CD8-positive, alpha-beta T cell (primary cell): ENCODE measurements at regions of chr3 and their contacts with region 1.

Region 1: DNA sequence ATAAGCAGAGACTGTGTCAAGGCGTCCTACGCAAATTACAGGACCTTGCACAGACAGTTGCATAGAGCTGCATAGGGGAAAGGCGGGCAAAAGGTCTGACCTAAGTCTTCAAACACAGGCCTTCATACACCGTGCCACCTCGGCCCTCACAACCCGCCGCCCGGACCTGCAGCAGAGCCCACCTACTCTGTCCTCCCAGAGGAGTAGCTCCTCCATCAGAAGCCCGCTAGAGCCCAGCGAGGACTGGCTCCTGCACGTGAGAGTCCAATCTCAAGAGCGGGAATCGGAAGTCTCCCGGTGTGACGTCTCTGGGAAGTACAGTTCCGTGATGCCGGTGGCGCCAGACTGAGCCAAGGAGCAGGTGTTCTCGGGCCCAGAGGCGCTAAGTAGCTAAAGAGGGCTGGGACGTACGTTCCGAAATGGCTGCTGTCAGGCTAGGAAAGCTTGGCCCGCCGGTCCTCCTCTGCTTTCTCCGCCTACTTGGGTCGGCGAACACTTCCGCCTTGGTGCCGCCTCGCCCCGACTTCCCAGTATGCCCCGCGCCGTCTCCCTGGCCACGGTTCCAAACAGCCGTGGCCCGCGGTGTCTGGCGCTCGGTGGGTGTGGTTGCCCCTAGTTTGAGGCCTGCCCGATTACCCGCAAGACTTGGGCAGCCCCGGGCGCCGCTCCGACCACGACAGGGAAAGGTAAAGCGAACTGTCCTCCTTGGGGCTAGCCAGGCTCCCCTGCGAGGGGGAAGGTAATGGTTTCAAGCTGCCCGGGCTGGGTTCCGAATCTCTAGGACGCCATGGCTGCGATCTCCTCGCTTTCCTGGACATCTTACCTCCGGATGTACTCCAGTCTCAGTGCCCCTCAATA is at the starts of genes ASTE1 and NEK11:
- DNase-seq: peak; percentile 88 to 95 (median 92)
- ATAC-seq: peak; percentile 96
- H3K4me3 ChIP-seq: peak within 1 kb of the TSS; percentile 90 to 97
- H3K4me3 Mint-ChIP-seq: peak within 1 kb of the TSS; percentile 94
- H3K27ac ChIP-seq: peak within 1 kb of the TSS; percentile 91 to 96
- H3K27ac Mint-ChIP-seq: peak within 1 kb of the TSS; percentile 99
- H3K4me1 ChIP-seq: peaks cover 49% of the 10 kb centered on the region
- H3K4me1 Mint-ChIP-seq: peaks cover 52% of the 10 kb centered on the region
- H3K27me3 ChIP-seq: no peaks in the 10 kb centered on the region
- H3K27me3 Mint-ChIP-seq: no peaks in the 10 kb centered on the region
- CTCF ChIP-seq: no peak
- total RNA-seq, gene ASTE1: 24.6 to 25.9 TPM
- total RNA-seq, gene NEK11: 3.6 to 3.8 TPM

Region 2: GRCh38 chr3:130111185-130111864 is 915.2 kb before region 1 on chr3:
- CTCF ChIA-PET with region 1: no interaction called
- POLR2A ChIA-PET with region 1: no interaction called
- intact Hi-C with region 1: loop called in 1 of 2 experiments (anchors 5 kb)
- DNase-seq: peak; percentile 97 to 100 (median 99)
- ATAC-seq: peak; percentile 100
- H3K4me3 ChIP-seq: peak overlapping the region; percentile 69 to 89
- H3K4me3 Mint-ChIP-seq: peak overlapping the region; percentile 99
- H3K27ac ChIP-seq: peak overlapping the region; percentile 82 to 95
- H3K27ac Mint-ChIP-seq: peak overlapping the region; percentile 100
- H3K4me1 ChIP-seq: peaks cover 3% of the 10 kb centered on the region
- H3K4me1 Mint-ChIP-seq: peaks cover 28% of the 10 kb centered on the region
- H3K27me3 ChIP-seq: no peaks in the 10 kb centered on the region
- H3K27me3 Mint-ChIP-seq: no peaks in the 10 kb centered on the region
- CTCF ChIP-seq: no peak

Region 3: DNA sequence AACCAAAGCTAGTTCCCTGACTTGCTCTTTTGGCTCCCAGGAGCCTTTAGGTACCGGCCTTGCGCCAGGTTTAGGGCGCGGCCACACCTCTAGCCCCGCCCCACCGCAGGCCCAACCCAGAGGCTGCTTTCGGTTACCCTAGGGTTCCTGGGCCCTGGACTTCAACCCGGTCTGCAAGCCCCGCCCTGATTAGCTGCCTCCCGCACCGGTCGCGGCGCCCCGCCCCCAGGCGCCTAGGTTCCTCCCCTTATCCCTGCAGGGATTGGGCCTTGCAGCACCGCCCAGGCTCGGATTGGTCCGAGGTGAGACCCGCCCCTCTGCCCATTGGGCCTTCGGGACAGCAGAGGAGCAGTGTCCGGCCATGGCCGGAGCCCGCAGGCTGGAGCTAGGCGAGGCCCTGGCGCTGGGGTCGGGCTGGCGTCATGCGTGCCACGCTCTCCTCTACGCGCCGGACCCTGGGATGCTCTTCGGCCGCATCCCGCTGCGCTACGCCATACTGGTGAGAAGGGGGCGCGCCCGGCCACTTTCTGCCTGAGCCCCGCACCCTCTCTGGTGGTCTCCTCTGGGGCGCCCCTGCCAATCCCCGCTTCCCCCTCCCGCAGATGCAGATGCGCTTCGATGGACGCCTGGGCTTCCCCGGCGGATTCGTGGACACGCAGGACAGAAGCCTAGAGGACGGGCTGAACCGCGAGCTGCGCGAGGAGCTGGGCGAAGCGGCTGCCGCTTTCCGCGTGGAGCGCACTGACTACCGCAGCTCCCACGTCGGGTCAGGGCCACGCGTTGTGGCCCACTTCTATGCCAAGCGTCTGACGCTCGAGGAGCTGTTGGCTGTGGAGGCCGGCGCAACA is 355.1 kb after region 1 on chr3 and contains the start of gene NUDT16:
- CTCF ChIA-PET with region 1: no interaction called
- POLR2A ChIA-PET with region 1: interaction called, 9 read pairs
- intact Hi-C with region 1: loop called (anchors 1 to 2 kb)
- DNase-seq: peak; percentile 92 to 97 (median 95)
- ATAC-seq: peak; percentile 96
- H3K4me3 ChIP-seq: peak within 1 kb of the TSS; percentile 86 to 94
- H3K4me3 Mint-ChIP-seq: peak within 1 kb of the TSS; percentile 96
- H3K27ac ChIP-seq: peak within 1 kb of the TSS; percentile 45 to 64
- H3K27ac Mint-ChIP-seq: peak within 1 kb of the TSS; percentile 91
- H3K4me1 ChIP-seq: peaks cover 13% of the 10 kb centered on the region
- H3K4me1 Mint-ChIP-seq: peaks cover 31% of the 10 kb centered on the region
- H3K27me3 ChIP-seq: no peaks in the 10 kb centered on the region
- H3K27me3 Mint-ChIP-seq: no peaks in the 10 kb centered on the region
- CTCF ChIP-seq: no peak
- total RNA-seq, gene NUDT16: 3.1 to 3.5 TPM

Region 4: DNA sequence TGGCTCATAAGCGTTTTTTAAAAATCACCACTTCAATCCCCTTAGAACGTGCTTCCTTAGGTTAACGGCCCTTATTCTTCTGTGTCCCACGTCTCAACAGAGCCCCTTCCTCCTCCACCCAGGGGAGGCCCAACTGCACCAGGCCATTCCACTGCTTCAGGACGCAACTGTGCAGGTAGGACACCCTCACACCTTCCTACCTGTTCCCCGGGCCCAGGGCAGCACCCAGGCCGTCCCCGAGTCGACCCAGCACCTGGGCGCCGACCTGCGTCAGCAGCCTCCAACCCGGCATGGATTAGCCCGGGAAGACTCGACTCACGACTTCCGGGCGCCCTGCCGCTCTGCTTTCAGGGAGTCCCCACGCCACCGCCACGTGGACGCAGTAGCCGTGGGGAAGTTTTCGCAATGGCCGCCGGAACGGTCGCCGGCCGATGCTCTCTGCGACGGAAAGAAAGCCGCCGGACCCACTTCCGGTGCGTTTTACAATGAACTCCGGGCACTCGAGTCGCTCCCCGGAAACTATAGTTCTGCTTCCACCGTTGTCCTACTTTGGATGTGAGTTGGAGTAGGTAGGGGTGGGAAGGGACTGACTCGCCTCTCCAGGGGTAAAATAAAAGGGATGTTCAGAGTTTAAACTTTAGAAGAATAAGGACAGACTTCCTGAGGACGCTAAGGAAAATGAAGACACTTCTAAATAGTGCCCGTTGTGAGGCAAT is 476.1 kb after region 1 on chr3 and contains the start of gene MRPL3:
- CTCF ChIA-PET with region 1: no interaction called
- POLR2A ChIA-PET with region 1: no interaction called
- intact Hi-C with region 1: loop called (anchors 1 to 2 kb)
- DNase-seq: peak; percentile 67 to 92 (median 84)
- ATAC-seq: peak; percentile 88
- H3K4me3 ChIP-seq: peak within 1 kb of the TSS; percentile 74 to 95
- H3K4me3 Mint-ChIP-seq: peak within 1 kb of the TSS; percentile 97
- H3K27ac ChIP-seq: peak within 1 kb of the TSS; percentile 78 to 83
- H3K27ac Mint-ChIP-seq: peak within 1 kb of the TSS; percentile 95
- H3K4me1 ChIP-seq: peaks cover 27% of the 10 kb centered on the region
- H3K4me1 Mint-ChIP-seq: peaks cover 45% of the 10 kb centered on the region
- H3K27me3 ChIP-seq: no peaks in the 10 kb centered on the region
- H3K27me3 Mint-ChIP-seq: no peaks in the 10 kb centered on the region
- CTCF ChIP-seq: no peak
- total RNA-seq, gene MRPL3: 43.6 to 45.0 TPM

Region 5: GRCh38 chr3:132659365-132660051 is 1633.0 kb after region 1 on chr3 and contains the start of gene ACAD11:
- CTCF ChIA-PET with region 1: no interaction called
- POLR2A ChIA-PET with region 1: no interaction called
- intact Hi-C with region 1: loop called in 1 of 2 experiments (anchors 10 kb)
- DNase-seq: peak in 8 of 9 experiments; percentile 2 to 68 (median 29)
- ATAC-seq: peak; percentile 26
- H3K4me3 ChIP-seq: peak within 1 kb of the TSS; percentile 80 to 94
- H3K4me3 Mint-ChIP-seq: peak within 1 kb of the TSS; percentile 96
- H3K27ac ChIP-seq: peak within 1 kb of the TSS; percentile 83 to 89
- H3K27ac Mint-ChIP-seq: peak within 1 kb of the TSS; percentile 98
- H3K4me1 ChIP-seq: peaks cover 35% of the 10 kb centered on the region
- H3K4me1 Mint-ChIP-seq: peaks cover 69% of the 10 kb centered on the region
- H3K27me3 ChIP-seq: no peaks in the 10 kb centered on the region
- H3K27me3 Mint-ChIP-seq: no peaks in the 10 kb centered on the region
- CTCF ChIP-seq: peak; percentile 8
- total RNA-seq, gene ACAD11: 30.0 to 31.6 TPM